Endothelial cell of umbilical vein (primary cell): ENCODE measurements at regions of chr16 and their contacts with region 1.

Region 1: GRCh38 chr16:1216296-1216619 is 8.8 kb downstream of the TPSG1 start:
- DNase-seq: no peak
- H3K4me3 ChIP-seq: no peak overlapping the region
- H3K27ac ChIP-seq: no peak overlapping the region
- H3K4me1 ChIP-seq: no peaks in the 10 kb centered on the region
- H3K27me3 ChIP-seq: no peaks in the 10 kb centered on the region
- CTCF ChIP-seq: no peak
- POLR2A ChIP-seq: no peak

Region 2: DNA sequence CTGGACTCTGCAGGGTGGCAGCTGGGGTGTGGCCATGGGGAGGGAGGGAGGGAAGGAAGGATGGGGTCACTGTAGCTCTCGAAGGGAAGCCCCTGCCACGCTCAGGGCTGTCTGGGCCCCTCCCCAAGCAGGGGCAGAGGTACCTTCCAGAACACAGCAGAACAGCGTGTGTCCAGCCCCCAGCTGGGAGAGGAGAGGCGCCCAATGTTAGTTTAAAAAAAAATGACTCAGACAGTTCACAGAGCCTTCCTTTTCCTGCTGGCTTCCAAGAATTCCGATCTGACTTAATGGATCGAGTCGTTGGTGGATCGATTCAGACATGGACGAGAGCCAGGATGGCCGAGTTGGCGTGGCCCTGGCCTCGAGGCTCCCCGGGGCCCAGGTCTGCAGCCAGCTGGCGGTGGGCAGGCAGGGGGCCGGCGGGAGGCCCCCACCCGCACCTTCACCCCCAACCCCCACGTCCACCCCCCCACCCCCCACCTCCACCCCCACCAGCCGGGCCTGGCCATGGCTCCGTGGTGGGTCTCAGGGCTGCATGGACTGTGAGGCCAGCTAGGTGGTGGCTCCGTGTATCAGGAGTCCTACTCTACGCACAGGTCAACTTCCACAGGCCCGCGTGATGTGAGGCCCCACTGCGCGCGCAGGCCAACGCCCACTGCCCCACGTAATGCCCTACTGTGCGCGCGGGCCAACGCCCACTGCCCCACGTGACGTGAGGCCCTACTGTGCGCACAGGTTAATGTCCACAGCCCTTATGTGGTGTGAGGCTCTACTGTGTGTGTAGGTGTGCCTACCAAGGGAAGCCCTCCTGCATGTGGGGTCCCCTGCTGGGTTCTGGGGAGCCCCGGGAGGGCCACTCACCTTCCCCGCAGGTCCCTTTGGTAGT is 41.5 kb before region 1 on chr16:
- CTCF ChIA-PET with region 1: no interaction called
- POLR2A ChIA-PET with region 1: interaction called, 3 read pairs
- dilution Hi-C with region 1: no loop called
- intact Hi-C with region 1: loop called (anchors 2 kb)
- DNase-seq: no peak
- H3K4me3 ChIP-seq: no peak overlapping the region
- H3K27ac ChIP-seq: no peak overlapping the region
- H3K4me1 ChIP-seq: no peaks in the 10 kb centered on the region
- H3K27me3 ChIP-seq: no peaks in the 10 kb centered on the region
- CTCF ChIP-seq: no peak
- POLR2A ChIP-seq: no peak

Region 3: GRCh38 chr16:1308977-1309885 is 93.0 kb after region 1 on chr16 and contains the start of gene UBE2I:
- CTCF ChIA-PET with region 1: no interaction called
- POLR2A ChIA-PET with region 1: no interaction called
- dilution Hi-C with region 1: no loop called
- intact Hi-C with region 1: no loop called
- DNase-seq: peak; percentile 99
- H3K4me3 ChIP-seq: peak within 1 kb of the TSS; percentile 74 to 94 (median 87)
- H3K27ac ChIP-seq: peak within 1 kb of the TSS; percentile 87
- H3K4me1 ChIP-seq: peaks cover 14% of the 10 kb centered on the region
- H3K27me3 ChIP-seq: no peaks in the 10 kb centered on the region
- CTCF ChIP-seq: no peak
- POLR2A ChIP-seq: peak; percentile 57
- total RNA-seq, gene UBE2I: 230 and 233 TPM in 2 replicates